ENCODE measurements at regions of chr11 and their contacts with region 1.

Region 1: GRCh38 chr11:57638005-57638781 is 11.5 kb downstream of the YPEL4 start:
- DNase-seq: peak; percentile 50 to 71 (median 66)
- ATAC-seq: peak; percentile 86
- H3K4me3 ChIP-seq: peak overlapping the region; percentile 31 to 83
- H3K27ac ChIP-seq: peak overlapping the region; percentile 50 to 79 (median 64)
- H3K4me1 ChIP-seq: peaks cover 10% of the 10 kb centered on the region
- H3K27me3 ChIP-seq: no peaks in the 10 kb centered on the region
- CTCF ChIP-seq: no peak
- POLR2A ChIP-seq: peak; percentile 48 to 69 (median 64)

Region 2: GRCh38 chr11:57172031-57172430 is 466.2 kb before region 1 on chr11:
- intact Hi-C with region 1: no loop called
- DNase-seq: no peak
- ATAC-seq: no peak
- H3K4me3 ChIP-seq: no peak overlapping the region
- H3K27ac ChIP-seq: no peak overlapping the region
- H3K4me1 ChIP-seq: no peaks in the 10 kb centered on the region
- H3K27me3 ChIP-seq: no peaks in the 10 kb centered on the region
- CTCF ChIP-seq: no peak
- POLR2A ChIP-seq: no peak

Region 3: GRCh38 chr11:57444362-57445121 is 193.7 kb before region 1 on chr11:
- intact Hi-C with region 1: loop called (anchors 10 kb)
- DNase-seq: no peak
- ATAC-seq: no peak
- H3K4me3 ChIP-seq: no peak overlapping the region
- H3K27ac ChIP-seq: no peak overlapping the region
- H3K4me1 ChIP-seq: no peaks in the 10 kb centered on the region
- H3K27me3 ChIP-seq: no peaks in the 10 kb centered on the region
- CTCF ChIP-seq: no peak
- POLR2A ChIP-seq: no peak

Region 4: DNA sequence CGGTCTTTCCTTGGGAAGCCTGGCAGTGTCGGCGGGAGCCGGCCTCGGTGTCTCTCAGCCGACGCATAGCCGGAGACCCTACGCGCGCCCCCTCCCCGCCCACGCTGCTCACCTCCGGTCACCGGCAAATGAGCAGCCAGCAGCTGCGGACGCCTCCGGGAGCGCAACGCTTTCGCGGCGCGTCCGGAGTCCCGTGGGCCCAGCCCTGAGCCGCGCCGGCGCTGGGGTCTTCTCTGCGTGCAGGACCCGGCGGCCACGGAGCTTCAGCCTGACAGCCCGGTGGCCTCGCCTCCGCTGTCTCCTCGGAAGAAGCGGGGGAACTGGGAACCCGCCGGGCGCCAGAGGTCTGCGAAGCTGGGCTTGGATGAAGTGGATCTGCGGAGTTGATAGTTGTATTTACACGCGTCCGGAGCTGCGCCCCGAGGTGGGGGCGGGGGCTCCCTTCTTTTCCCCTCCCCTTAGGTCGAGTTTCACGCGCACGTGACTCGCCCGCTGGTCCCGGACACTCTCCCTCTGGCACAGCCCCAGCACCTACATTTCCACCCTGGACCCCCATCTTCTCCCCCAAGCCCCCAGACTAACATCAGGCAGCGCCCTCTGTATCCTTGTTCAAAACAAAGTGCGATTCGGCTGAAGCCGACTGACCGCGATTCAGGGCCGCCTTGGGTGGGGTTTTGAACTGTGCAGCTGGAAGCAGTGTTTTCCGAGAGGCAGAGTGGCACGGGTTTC is 122.7 kb before region 1 on chr11 and contains the start of gene SLC43A1:
- intact Hi-C with region 1: no loop called
- DNase-seq: peak; percentile 80 to 88 (median 80)
- ATAC-seq: peak; percentile 74
- H3K4me3 ChIP-seq: peak within 1 kb of the TSS; percentile 90 to 92
- H3K27ac ChIP-seq: peak within 1 kb of the TSS; percentile 78 to 95 (median 92)
- H3K4me1 ChIP-seq: peaks cover 24% of the 10 kb centered on the region
- H3K27me3 ChIP-seq: no peaks in the 10 kb centered on the region
- CTCF ChIP-seq: peak in 1 of 7 experiments; percentile 15
- POLR2A ChIP-seq: peak; percentile 54 to 71 (median 69)
- total RNA-seq, gene SLC43A1: 87.7 to 128 TPM

Measured in body of pancreas (tissue), 4 donors.